PC-9 (cell line): ENCODE measurements at regions of chr1 and their contacts with region 1.

Region 1: DNA sequence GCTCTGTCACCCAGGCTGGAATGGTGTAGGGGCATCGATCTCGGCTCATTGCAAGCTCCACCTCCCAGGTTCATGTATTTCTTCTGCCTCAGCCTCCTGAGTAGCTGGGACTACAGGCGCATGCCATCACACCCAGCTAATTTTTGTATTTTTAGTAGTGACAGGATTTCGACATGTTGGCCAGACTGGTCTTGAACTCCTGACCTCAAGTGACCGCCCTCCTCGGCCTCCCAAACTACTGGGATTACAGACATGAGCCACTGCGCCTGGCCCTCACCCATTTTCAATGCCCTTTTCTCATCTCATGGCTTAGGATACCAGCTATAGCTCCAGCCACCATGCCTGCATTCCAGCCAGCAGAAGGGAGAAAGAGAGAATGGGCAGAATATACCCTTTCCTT is 12.9 kb upstream of the SOX13 start:
- DNase-seq: no peak
- H3K4me3 ChIP-seq: no peak overlapping the region
- H3K27ac ChIP-seq: no peak overlapping the region
- H3K4me1 ChIP-seq: peaks cover 54% of the 10 kb centered on the region
- H3K27me3 ChIP-seq: no peaks in the 10 kb centered on the region
- CTCF ChIP-seq: no peak

Region 2: DNA sequence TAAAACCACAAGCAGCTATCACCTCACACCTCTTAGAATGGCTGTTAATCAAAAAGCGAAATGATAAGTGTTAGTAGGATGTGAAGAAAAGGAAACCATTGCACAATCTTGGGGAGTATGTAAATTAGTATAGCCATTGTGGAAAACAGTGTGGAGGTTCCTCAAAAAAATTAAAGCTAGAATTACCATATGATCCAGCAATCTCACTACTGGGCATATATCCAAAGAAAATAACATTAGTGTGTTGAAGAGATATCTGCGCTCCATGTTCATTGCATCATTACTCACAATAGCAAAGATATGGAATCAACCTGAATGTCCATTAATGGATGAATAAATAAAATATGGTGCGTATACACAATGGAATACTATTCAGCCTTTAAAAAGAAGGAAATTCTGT is 129.6 kb before region 1 on chr1:
- CTCF ChIA-PET with region 1: no interaction called
- POLR2A ChIA-PET with region 1: no interaction called
- intact Hi-C with region 1: loop called (anchors 5 kb)
- DNase-seq: no peak
- H3K4me3 ChIP-seq: no peak overlapping the region
- H3K27ac ChIP-seq: no peak overlapping the region
- H3K4me1 ChIP-seq: peaks cover 31% of the 10 kb centered on the region
- H3K27me3 ChIP-seq: no peaks in the 10 kb centered on the region
- CTCF ChIP-seq: no peak